ENCODE measurements at regions of chr10 and their contacts with region 1.

Region 1: DNA sequence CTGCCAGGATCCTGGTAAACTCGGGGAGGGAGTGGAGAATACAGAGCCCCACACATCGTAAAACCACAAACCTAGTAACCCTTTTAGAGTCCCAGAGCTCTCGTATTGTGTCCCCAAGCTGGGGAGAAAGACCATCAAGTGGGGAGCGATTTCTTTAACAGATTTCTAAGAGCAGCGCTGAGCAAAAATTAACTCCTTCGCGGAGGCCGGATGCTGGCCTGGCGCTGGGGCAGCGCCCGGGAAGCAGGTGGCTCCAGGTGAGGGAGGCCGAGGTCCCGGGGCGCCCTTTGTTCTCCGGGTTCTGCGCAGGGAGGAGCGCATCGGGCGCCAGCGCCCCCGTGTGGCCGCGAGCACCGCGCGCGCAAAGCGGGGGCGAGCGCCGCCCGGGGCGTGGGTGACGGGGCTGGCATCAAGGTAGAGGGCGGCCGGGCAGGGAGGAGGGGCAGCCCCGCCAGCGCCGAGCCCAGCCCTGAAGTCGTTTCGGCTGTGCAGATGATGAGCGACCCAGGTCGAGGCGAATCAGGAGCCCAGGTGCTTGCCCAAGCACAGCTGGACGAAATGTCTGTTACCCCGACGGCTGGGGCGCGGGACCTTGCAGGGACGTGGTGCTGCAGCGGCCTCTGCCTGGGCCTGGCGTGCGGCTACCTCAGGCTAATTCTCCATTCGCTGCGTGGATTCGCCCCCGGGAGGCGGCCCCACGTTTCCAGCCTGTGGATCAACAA is 10.4 kb upstream of the FGFR2 start:
- DNase-seq: peak; percentile 82
- CTCF ChIP-seq: peak; percentile 80

Region 2: DNA sequence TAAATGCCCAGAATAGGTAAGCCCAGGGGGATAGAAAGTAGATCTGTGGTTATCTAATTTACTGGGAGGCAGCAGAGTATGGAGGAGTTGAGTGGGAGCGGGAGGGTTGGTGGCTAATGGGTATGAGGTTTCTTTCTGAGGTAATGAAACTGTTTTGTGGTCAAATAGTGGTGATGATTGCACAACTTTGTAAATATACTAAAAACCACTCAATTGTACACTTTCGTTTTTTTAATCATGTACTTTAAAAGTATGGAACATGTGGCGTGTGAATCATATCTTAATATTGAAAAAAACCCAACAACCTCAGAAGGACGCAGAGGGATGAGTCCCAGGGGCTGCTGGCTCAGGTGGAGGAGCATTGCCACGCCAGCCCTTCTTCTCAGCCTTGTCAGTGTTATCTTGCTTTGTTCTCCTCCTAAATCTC is 639.4 kb before region 1 on chr10:
- in situ Hi-C with region 1: loop called (anchors 25 kb)
- DNase-seq: no peak
- CTCF ChIP-seq: no peak

Region 3: GRCh38 chr10:121927841-121928527 is 319.4 kb after region 1 on chr10 and contains the start of gene ATE1:
- in situ Hi-C with region 1: no loop called
- DNase-seq: peak; percentile 94
- CTCF ChIP-seq: no peak